HCT116 (cell line): ENCODE measurements at regions of chr7 and their contacts with region 1.

Region 1: DNA sequence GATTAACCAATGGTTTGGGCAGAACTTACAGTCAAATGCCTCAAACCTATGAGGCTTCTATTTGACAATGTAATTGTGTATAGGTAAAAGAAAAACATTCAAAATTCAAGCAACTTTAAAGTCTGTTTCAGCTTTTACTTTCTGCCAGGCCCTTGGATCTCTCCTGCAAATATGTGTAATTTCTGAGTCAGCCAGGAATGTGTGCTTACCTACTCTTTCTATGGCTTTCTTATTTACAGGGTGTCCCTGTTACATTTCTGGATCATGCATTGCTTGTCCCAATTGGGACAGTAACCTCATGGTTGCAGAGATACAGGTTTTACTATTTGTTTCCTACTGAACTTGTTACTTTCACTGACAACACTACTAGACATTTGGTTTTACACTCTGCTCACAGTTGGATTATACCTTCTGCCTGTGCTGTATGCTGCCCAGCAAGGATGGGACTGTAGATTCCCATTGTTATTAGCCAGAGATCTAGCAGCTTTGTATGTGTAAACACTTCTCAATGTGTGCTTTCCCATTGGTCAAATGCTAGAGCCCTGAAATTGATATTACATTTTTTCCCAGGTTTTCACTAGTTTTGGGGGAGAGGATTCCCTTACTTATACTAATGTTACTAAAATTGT is 355.3 kb downstream of the ARL4A start:
- DNase-seq: peak; percentile 56
- ATAC-seq: peak; percentile 54
- H3K4me3 ChIP-seq: peak overlapping the region in 1 of 2 experiments; percentile 51; a peak in 2 of 4 replicates
- H3K27ac ChIP-seq: peak overlapping the region; percentile 68; the same call in 1 of the 2 replicates
- H3K4me1 ChIP-seq: peaks cover 28 to 66% of the 10 kb centered on the region in 2 experiments
- H3K27me3 ChIP-seq: no peaks in the 10 kb centered on the region
- CTCF ChIP-seq: no peak
- POLR2A ChIP-seq: no peak
- RAD21 ChIP-seq: 0 out of 2 replicates have a peak, but pooled peaks have one; percentile 2

Region 2: DNA sequence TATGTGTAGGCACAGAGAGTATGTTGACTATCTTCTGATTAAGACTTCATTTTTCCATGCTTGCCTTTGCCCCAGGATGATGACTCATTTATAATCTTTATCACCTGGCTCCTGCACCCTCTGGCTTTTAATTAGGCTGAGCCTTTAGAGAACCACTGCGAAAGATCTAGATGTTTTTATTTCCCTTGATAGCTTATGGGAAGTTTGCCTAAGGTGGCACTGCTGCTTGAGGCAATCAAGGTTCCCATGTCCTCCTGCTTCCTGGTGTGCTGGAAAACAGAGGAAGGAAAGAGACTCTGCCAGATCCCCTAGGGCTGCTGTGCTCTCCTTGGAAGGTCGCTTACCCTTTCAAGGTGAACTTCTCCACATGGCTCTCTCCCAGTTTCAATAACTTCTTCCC is 240.6 kb before region 1 on chr7:
- CTCF ChIA-PET with region 1: no interaction called
- POLR2A ChIA-PET with region 1: no interaction called
- RAD21 ChIA-PET with region 1: no interaction called
- intact Hi-C with region 1: loop called (anchors 5 kb)
- DNase-seq: peak; percentile 42
- ATAC-seq: peak; percentile 57; the same call in 1 of the 2 replicates
- H3K4me3 ChIP-seq: peak overlapping the region in 1 of 2 experiments; percentile 42; a peak in 2 of 4 replicates
- H3K27ac ChIP-seq: peak overlapping the region; percentile 54
- H3K4me1 ChIP-seq: peaks cover 35 to 38% of the 10 kb centered on the region in 2 experiments
- H3K27me3 ChIP-seq: no peaks in the 10 kb centered on the region
- CTCF ChIP-seq: no peak
- POLR2A ChIP-seq: no peak
- RAD21 ChIP-seq: peak; percentile 25

Region 3: DNA sequence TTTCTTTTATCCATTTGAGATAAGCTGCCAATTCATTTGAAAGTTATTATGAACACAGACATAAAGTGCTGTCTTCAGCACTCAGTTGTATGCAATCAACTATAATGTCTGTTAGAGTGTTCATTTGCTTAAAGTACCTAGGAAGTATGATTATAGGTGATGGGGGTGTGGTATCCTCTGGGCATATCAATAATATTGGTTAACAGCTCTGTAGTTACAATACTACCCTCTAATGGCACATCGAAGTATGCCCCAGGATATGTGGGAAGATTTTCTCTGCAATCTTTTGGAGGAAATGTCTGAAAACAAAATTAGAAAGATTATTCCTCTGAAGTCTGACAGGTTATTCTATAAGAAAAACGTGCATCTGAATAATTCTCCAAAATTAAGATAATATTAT is 74.4 kb after region 1 on chr7:
- CTCF ChIA-PET with region 1: no interaction called
- POLR2A ChIA-PET with region 1: no interaction called
- RAD21 ChIA-PET with region 1: no interaction called
- intact Hi-C with region 1: loop called (anchors 5 kb)
- DNase-seq: peak; percentile 18
- ATAC-seq: peak; percentile 80
- H3K4me3 ChIP-seq: no peak overlapping the region
- H3K27ac ChIP-seq: no peak overlapping the region
- H3K4me1 ChIP-seq: peaks cover 0 to 11% of the 10 kb centered on the region in 2 experiments; a peak in 1 of 4 replicates
- H3K27me3 ChIP-seq: no peaks in the 10 kb centered on the region
- CTCF ChIP-seq: peak; percentile 59 to 72 (median 67); a peak in 5 of 6 replicates
- POLR2A ChIP-seq: no peak
- RAD21 ChIP-seq: peak; percentile 89